ENCODE measurements at regions of chr5 and their contacts with region 1.

Region 1: DNA sequence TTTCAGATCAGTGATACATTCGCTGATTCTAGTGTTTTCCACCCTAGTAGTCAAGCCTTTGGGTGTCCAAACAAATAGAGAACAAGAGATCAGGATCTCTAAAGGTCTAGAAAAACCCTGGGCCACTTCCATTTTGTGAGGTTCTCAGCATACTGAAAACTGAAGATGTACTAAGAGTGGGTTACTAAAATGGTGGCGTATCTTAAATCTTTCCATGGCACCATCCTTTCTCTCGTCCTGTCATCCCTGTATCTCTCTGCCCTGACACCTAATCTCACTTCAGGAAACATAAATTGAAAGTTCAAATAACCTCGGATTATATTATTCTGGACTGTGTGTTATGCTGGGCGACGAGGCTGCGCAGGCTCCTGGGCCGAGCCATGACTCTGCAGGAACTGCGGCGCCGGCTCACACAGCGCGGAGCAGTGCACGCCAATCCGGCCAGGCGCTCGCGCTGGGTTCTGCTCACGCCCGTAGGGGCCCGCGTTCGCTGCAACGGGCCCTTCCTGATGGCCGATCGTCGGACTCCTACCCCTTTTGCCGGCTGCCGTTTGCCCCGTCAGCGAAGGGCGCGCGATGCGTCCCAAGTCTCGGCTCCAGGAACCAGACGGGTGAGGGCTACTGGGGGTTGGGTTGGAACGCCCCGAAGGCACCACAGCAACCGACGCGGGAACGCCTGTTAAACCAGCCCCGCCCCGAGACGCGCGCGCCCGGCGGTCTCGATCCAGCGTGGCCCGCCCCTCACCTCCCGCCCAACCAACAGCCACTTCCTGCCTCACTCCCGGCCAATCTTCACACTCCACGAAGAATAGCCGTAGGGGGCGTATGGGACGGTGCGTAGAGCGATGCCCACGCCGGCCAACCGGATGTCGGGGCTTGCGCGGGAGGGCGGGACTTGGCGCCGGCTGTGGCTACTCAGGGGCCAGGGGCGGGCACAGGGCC is 503 bp upstream of the CANX start:
- DNase-seq: peak; percentile 100

Region 2: GRCh38 chr5:179678223-179679013 is 19.8 kb before region 1 on chr5:
- intact Hi-C with region 1: loop called (anchors 1 kb)
- DNase-seq: peak; percentile 98

Region 3: GRCh38 chr5:179732417-179732917 is 34.2 kb after region 1 on chr5 and contains the start of gene MAML1:
- intact Hi-C with region 1: loop called (anchors 2 kb)
- DNase-seq: peak; percentile 100
- total RNA-seq, gene MAML1: 13.2 TPM

Region 4: DNA sequence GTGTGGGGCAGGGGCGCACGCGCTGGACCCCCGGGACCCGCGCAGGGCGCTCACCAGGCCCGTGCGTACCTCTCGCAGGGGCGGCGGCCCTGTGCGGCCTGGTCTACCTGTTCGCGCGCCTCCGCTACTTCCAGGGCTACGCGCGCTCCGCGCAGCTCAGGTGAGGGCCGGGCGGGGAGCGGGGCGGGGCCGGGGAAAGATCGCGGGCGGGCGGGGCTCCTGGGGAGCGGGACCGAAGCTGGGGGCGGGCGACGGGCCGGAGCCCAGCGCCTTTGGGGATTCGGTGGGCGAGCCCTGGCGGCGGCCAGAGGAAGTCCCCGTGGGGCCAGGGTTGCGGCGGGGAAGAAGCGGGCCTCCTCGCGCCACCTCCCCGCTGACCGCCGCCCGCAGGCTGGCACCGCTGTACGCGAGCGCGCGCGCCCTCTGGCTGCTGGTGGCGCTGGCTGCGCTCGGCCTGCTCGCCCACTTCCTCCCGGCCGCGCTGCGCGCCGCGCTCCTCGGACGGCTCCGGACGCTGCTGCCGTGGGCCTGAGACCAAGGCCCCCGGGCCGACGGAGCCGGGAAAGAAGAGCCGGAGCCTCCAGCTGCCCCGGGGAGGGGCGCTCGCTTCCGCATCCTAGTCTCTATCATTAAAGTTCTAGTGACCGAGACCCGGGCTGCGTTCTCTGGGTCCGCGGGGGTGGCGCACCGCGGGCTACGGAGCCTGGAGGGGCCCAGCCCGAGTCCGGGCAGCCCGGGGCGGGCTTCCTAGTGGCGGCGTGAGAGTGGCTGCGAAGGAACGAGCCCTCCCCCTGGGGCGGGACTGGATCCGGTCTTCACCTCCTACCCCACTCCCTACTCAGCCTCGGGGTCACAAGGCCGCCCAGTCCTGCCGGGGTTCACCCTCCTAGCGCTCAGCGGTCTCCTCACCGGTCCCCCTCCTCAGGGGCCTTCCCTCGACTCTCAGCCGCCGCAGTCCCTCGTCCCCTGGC is 97.9 kb after region 1 on chr5:
- intact Hi-C with region 1: loop called (anchors 5 kb)
- DNase-seq: peak; percentile 92

Region 5: GRCh38 chr5:179852993-179853547 is 154.8 kb after region 1 on chr5:
- intact Hi-C with region 1: no loop called
- DNase-seq: no peak